GM18951 (cell line): ENCODE measurements at regions of chr4 and their contacts with region 1.

Region 1: GRCh38 chr4:73019462-73020047 is 50.0 kb downstream of the COX18 start:
- POLR2A ChIP-seq: no peak

Region 2: GRCh38 chr4:72302981-72303704 is 716.4 kb before region 1 on chr4:
- in situ Hi-C with region 1: loop called (anchors 25 kb)
- POLR2A ChIP-seq: no peak

Region 3: DNA sequence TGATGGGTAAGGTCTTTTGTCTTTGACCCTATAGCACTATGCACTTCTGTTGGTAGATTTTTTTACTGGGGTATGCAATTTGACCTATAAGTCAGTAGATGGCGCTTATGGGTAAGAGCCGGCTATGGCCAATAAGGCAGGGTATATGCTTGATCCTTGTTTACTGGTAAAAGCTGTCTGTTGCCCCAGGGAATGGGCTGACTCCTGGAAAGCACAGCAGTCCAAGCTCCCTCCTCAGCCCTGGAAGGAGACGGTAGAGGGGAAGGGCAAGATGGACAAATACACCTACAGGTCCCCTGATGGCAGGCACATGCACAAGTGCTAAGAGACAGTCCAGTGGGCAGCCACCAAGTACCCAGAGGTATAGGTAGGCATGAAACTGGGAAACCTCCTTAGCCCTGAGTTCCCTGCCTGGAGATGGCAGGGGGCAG is 514.2 kb before region 1 on chr4:
- in situ Hi-C with region 1: loop called (anchors 25 kb)
- POLR2A ChIP-seq: no peak

Region 4: DNA sequence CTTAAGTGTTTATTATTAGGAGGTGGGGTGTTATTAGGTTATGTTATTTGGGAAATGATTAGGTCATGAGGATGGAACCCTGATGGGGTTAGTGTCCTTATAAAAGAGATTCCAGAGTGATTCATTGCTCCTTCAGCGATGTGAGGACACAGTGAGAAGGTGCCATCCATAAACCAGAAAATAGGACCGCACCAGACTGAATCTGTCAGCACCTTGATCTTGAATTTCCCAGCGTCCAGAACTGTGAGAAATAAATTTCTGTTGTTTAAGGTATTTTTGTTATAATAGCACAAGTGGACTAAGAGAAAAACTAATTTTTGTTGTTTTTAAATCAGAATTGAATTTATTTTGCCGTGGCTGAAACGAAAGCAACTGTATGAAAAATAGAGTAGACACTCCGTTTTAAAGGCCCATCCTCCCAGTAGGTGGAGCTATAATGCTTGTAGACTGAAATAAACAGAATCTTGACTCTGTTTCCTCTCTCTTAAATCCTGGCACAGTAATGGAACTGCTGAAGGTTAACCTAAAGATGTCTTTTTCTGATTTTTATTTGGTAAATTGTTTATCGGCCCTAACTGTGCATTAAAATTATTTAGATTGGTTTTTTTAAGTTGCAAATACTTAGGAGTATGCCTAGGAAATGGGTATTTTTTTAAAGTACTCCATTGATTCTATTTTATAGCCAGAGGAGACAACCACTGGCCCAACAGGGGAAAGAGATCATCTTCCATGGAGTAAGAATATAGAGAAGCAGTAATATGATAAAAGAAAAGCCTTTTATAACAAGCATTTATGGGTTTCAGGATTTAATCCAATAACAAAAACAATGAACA is 317.4 kb before region 1 on chr4:
- in situ Hi-C with region 1: loop called (anchors 10 kb)
- POLR2A ChIP-seq: no peak